SK-N-SH (cell line): ENCODE measurements at regions of chr5 and their contacts with region 1.

Region 1: GRCh38 chr5:80672140-80672736 is 17.5 kb upstream of the DHFR start:
- DNase-seq: peak; percentile 69
- H3K4me3 ChIP-seq: no peak overlapping the region; a peak in 1 of 4 replicates
- H3K27ac ChIP-seq: no peak overlapping the region
- H3K4me1 ChIP-seq: peaks cover 0 to 5% of the 10 kb centered on the region in 2 experiments; a peak in 2 of 4 replicates
- H3K27me3 ChIP-seq: no peaks in the 10 kb centered on the region
- CTCF ChIP-seq: peak; percentile 84
- EP300 ChIP-seq: no peak
- RAD21 ChIP-seq: peak; percentile 75

Region 2: GRCh38 chr5:80541392-80541791 is 130.8 kb before region 1 on chr5:
- CTCF ChIA-PET with region 1: no interaction called
- POLR2A ChIA-PET with region 1: no interaction called
- DNase-seq: no peak
- H3K4me3 ChIP-seq: no peak overlapping the region; a peak in 1 of 4 replicates
- H3K27ac ChIP-seq: peak overlapping the region in 1 of 2 experiments; percentile 56; a peak in 1 of 4 replicates
- H3K4me1 ChIP-seq: no peaks in the 10 kb centered on the region; a peak in 2 of 4 replicates
- H3K27me3 ChIP-seq: no peaks in the 10 kb centered on the region
- CTCF ChIP-seq: no peak
- EP300 ChIP-seq: no peak
- RAD21 ChIP-seq: no peak

Region 3: DNA sequence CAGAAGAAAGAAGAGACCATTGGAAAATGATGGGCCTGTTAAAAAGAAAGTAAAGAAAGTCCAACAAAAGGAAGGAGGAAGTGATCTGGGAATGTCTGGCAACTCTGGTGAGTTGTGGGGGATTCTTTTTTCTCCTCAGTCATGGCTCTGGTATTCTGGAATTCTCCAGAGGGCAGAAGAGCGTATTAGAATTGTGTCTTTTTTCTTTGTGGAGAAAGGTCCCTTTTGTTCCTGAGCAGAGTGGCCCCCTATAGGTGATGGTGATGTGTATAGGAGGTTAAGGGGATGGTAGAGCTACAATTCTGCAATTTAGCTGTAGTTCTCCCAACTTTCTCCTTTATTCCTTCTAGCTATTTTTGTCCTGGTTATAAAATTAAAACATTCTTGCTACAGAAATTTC is 15.8 kb before region 1 on chr5:
- CTCF ChIA-PET with region 1: interaction called, 10 read pairs
- POLR2A ChIA-PET with region 1: no interaction called
- DNase-seq: no peak
- H3K4me3 ChIP-seq: no peak overlapping the region
- H3K27ac ChIP-seq: peak overlapping the region in 1 of 2 experiments; percentile 27; a peak in 1 of 4 replicates
- H3K4me1 ChIP-seq: peaks cover 8 to 15% of the 10 kb centered on the region in 2 experiments; a peak in 2 of 4 replicates
- H3K27me3 ChIP-seq: no peaks in the 10 kb centered on the region
- CTCF ChIP-seq: peak; percentile 33
- EP300 ChIP-seq: no peak
- RAD21 ChIP-seq: no peak; the same call in 1 of the 2 replicates

Region 4: GRCh38 chr5:80686757-80687156 is 14.5 kb after region 1 on chr5:
- CTCF ChIA-PET with region 1: interaction called, 10 read pairs
- POLR2A ChIA-PET with region 1: no interaction called
- DNase-seq: no peak
- H3K4me3 ChIP-seq: no peak overlapping the region; a peak in 1 of 4 replicates
- H3K27ac ChIP-seq: no peak overlapping the region
- H3K4me1 ChIP-seq: no peaks in the 10 kb centered on the region
- H3K27me3 ChIP-seq: no peaks in the 10 kb centered on the region
- CTCF ChIP-seq: peak; percentile 64
- EP300 ChIP-seq: no peak
- RAD21 ChIP-seq: peak; percentile 67

Region 5: DNA sequence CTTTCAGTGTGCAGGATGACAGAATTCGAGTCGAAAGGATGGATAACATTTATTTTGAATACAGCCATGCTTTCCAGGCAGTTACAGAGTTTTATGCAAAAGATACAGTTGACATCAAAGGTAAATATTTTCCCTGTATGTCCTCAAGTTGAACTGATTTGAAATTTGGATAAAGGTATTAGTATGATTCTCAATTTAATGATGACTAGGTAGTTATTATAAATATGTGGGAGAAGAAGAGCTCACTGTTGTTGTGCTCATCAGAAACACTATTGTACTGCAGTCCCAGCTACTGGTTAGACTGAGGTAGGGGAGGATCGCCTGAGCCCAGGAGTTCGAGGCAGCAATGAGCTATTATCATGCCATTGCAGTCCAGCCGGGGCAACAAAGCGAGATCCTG is 53.2 kb after region 1 on chr5:
- CTCF ChIA-PET with region 1: no interaction called
- POLR2A ChIA-PET with region 1: no interaction called
- DNase-seq: no peak
- H3K4me3 ChIP-seq: no peak overlapping the region
- H3K27ac ChIP-seq: no peak overlapping the region
- H3K4me1 ChIP-seq: no peaks in the 10 kb centered on the region
- H3K27me3 ChIP-seq: no peaks in the 10 kb centered on the region
- CTCF ChIP-seq: no peak
- EP300 ChIP-seq: no peak
- RAD21 ChIP-seq: no peak